Calu3 (cell line): ENCODE measurements at regions of chr18 and their contacts with region 1.

Region 1: GRCh38 chr18:10140461-10141282 is 226.9 kb downstream of the VAPA start:
- DNase-seq: peak; percentile 54
- H3K4me3 Mint-ChIP-seq: no peak overlapping the region
- H3K27ac Mint-ChIP-seq: peak overlapping the region; percentile 10
- H3K4me1 Mint-ChIP-seq: peaks cover 37% of the 10 kb centered on the region
- H3K27me3 Mint-ChIP-seq: no peaks in the 10 kb centered on the region
- CTCF ChIP-seq: no peak

Region 2: GRCh38 chr18:9971313-9971920 is 169.3 kb before region 1 on chr18:
- CTCF ChIA-PET with region 1: no interaction called
- intact Hi-C with region 1: loop called (anchors 10 kb)
- DNase-seq: peak; percentile 76
- H3K4me3 Mint-ChIP-seq: no peak overlapping the region
- H3K27ac Mint-ChIP-seq: no peak overlapping the region
- H3K4me1 Mint-ChIP-seq: peaks cover 20% of the 10 kb centered on the region
- H3K27me3 Mint-ChIP-seq: peaks cover 16% of the 10 kb centered on the region
- CTCF ChIP-seq: peak; percentile 71

Region 3: GRCh38 chr18:10121786-10122542 is 18.7 kb before region 1 on chr18:
- CTCF ChIA-PET with region 1: no interaction called
- intact Hi-C with region 1: loop called (anchors 1 kb)
- DNase-seq: peak; percentile 18
- H3K4me3 Mint-ChIP-seq: no peak overlapping the region
- H3K27ac Mint-ChIP-seq: no peak overlapping the region
- H3K4me1 Mint-ChIP-seq: no peaks in the 10 kb centered on the region
- H3K27me3 Mint-ChIP-seq: peaks cover 9% of the 10 kb centered on the region
- CTCF ChIP-seq: no peak